ENCODE measurements at regions of chrX and their contacts with region 1.

Region 1: GRCh38 chrX:27674491-27674890 is 84.3 kb downstream of the DCAF8L2 start:
- DNase-seq: no peak
- H3K4me3 ChIP-seq: no peak overlapping the region
- H3K27ac ChIP-seq: no peak overlapping the region
- H3K4me1 ChIP-seq: no peaks in the 10 kb centered on the region
- H3K27me3 ChIP-seq: no peaks in the 10 kb centered on the region
- CTCF ChIP-seq: no peak

Region 2: DNA sequence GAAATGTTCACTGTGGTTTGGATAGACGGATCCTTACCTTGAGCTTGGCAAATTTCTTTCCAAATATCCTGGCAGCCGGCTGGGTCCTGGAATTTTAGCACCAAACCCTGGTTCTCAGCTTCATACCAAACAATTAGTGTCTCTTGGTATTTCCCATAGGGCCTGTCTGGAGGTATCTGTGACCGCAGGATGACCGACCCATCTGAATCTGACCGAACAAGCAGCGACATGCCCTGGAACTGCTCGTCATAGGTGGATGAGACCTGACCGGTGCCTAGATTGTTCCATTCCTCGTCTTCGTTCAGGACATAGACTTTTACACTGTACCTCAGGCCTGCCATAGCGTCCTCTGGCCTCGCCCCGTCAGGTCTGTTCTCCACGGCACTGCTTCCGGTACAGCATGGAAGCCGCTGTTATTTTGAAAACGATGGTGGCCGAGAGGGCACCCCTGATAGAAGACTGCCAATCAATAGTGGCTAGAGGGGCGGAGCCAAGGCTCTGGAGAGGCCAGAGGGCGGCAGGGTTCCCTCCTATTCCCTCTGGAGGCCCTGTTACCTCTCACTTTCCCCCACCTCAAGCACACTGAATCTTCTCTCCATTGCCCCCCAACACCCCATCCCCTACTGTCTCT is 211.4 kb before region 1 on chrX and contains the start of gene PPP4R3C:
- CTCF ChIA-PET with region 1: no interaction called
- POLR2A ChIA-PET with region 1: no interaction called
- intact Hi-C with region 1: no loop called
- DNase-seq: no peak
- H3K4me3 ChIP-seq: no peak within 1 kb of the TSS
- H3K27ac ChIP-seq: no peak within 1 kb of the TSS
- H3K4me1 ChIP-seq: no peaks in the 10 kb centered on the region
- H3K27me3 ChIP-seq: no peaks in the 10 kb centered on the region
- CTCF ChIP-seq: no peak
- total RNA-seq, gene PPP4R3C: not detected in 2 replicates

Region 3: DNA sequence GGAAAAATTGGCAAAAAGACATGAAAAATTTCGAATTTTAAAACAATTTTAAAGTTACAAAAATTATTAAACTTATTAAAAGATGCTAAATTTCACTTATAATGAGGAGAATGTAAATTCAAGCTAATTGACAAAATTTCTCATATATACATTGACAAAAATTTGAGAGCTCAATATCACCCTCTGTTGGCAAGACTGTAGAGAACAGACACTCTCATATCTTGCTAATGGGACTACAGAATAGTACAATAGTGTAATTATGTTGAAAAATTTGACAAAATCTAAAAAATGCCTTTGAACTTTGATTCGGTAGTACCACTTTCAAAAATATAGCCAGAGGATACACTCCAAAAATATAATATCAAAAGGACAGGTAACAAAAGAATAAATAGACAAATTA is 54.5 kb before region 1 on chrX:
- CTCF ChIA-PET with region 1: no interaction called
- POLR2A ChIA-PET with region 1: no interaction called
- intact Hi-C with region 1: loop called (anchors 5 kb)
- DNase-seq: peak; percentile 24
- H3K4me3 ChIP-seq: no peak overlapping the region
- H3K27ac ChIP-seq: no peak overlapping the region
- H3K4me1 ChIP-seq: no peaks in the 10 kb centered on the region
- H3K27me3 ChIP-seq: no peaks in the 10 kb centered on the region
- CTCF ChIP-seq: peak; percentile 59